ENCODE measurements at regions of chr15 and their contacts with region 1.

Region 1: DNA sequence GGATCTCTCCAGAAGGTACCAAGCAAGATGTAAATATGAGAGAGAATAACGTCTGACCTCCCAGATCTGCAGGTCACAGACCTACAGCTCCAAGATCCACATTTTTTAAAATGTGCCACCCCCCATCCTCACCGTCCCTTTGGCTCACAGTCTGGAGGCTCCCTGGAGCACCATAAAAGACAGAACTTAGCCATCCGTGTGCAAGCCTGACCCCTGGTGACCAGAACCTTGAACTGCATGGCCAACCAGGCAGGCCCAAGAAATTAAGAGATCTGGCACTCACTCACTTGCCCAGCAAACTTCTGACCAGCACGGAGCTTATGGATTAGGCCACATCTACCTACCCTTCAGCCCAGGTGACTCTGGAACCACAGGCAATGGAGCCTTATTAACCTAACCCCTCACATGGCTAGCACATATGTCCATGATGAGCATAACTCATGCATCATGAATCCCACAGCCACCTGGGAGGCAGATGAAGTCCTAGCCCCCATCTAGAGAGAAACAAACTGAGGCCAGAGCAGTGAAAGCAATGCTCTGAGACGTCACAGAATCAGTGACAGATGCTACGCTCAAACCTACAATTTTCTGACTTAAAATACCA is 275.3 kb downstream of the UACA start:
- DNase-seq: peak; percentile 82
- ATAC-seq: no peak
- H3K4me3 Mint-ChIP-seq: no peak overlapping the region
- H3K27ac Mint-ChIP-seq: no peak overlapping the region
- H3K4me1 Mint-ChIP-seq: peaks cover 76% of the 10 kb centered on the region
- H3K27me3 Mint-ChIP-seq: peaks cover 69% of the 10 kb centered on the region

Region 2: GRCh38 chr15:70097337-70098169 is 390.6 kb before region 1 on chr15 and contains the start of gene TLE3:
- CTCF ChIA-PET with region 1: interaction called, 19 read pairs
- DNase-seq: peak; percentile 98
- ATAC-seq: peak; percentile 74
- H3K4me3 Mint-ChIP-seq: peak within 1 kb of the TSS; percentile 95
- H3K27ac Mint-ChIP-seq: peak within 1 kb of the TSS; percentile 97
- H3K4me1 Mint-ChIP-seq: peaks cover 56% of the 10 kb centered on the region
- H3K27me3 Mint-ChIP-seq: peaks cover 22% of the 10 kb centered on the region
- total RNA-seq, gene TLE3: 48.8 to 53.5 TPM

Region 3: DNA sequence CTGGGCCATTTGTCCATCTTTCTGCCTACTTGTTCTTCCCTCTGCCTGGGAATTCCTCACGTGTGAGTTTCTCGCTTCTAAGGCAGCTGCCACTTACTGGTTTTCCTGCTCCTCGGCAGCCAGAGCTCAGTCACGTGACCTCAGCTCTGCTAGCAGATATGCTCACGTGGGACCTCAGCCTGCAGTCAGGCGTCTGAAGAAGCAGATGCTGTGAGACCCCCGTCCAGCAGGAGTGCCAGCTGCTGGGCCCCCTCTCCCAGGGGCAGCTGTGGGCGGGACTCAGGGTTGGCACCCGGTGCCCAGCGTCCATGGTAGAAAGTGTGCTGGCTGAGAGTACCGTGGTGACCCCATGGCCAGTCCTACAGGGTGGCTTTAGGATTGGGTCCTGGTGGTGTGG is 229.1 kb before region 1 on chr15:
- CTCF ChIA-PET with region 1: interaction called, 11 read pairs
- DNase-seq: peak; percentile 71
- ATAC-seq: peak; percentile 35
- H3K4me3 Mint-ChIP-seq: peak overlapping the region; percentile 4
- H3K27ac Mint-ChIP-seq: peak overlapping the region; percentile 56
- H3K4me1 Mint-ChIP-seq: peaks cover 34% of the 10 kb centered on the region
- H3K27me3 Mint-ChIP-seq: peaks cover 36% of the 10 kb centered on the region

Region 4: DNA sequence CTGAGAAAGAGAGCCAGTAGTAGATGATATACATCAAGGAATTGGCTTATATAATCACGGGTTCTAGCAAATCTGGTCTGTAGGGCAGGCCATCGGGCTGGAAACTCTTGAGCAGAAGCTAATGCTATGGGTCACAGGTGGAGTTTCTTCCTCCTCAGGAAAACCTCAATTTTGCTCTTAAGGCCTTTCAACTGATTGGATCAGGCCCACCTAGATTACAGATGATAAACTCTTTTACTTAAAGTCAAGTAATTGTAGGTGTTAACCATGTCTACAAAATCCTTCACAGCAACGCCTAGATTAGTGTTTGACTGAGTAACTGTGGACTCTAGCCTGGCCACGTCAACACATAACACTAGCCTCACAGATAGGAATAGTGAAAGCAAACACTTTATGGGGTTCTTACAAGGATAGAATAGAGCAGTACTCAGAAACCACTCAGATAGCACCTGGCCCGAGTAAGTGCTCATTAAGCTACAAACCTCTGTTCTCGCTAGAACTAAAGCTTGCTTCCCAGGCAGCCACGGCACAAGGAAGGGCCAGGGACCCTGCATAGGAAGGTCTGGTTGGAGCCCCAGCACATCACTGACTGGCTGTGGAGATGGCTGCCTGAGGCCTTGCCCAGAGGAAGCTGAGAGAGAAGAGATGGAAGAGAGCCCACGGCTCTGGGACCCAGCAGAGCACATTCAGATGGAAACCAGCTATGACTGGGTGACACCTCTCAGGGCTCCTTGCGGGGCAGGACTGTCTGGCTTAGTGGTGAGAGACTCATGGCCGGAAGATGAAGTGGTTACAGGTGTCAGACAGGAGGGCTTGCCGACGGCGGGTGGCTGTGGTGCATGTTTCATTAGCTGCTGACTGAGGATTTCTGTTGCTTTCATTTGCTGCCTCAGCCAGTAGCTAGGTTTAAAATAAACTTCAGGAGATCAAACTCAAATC is 187.9 kb before region 1 on chr15:
- CTCF ChIA-PET with region 1: interaction called, 11 read pairs
- DNase-seq: peak; percentile 94
- ATAC-seq: peak; percentile 97
- H3K4me3 Mint-ChIP-seq: no peak overlapping the region
- H3K27ac Mint-ChIP-seq: peak overlapping the region; percentile 58
- H3K4me1 Mint-ChIP-seq: peaks cover 18% of the 10 kb centered on the region
- H3K27me3 Mint-ChIP-seq: peaks cover 36% of the 10 kb centered on the region

Region 5: GRCh38 chr15:70466895-70467529 is 21.1 kb before region 1 on chr15:
- CTCF ChIA-PET with region 1: interaction called, 55 read pairs
- DNase-seq: peak; percentile 65
- ATAC-seq: peak; percentile 87
- H3K4me3 Mint-ChIP-seq: no peak overlapping the region
- H3K27ac Mint-ChIP-seq: no peak overlapping the region
- H3K4me1 Mint-ChIP-seq: peaks cover 4% of the 10 kb centered on the region
- H3K27me3 Mint-ChIP-seq: peaks cover 87% of the 10 kb centered on the region

Region 6: GRCh38 chr15:70504299-70504951 is 16.3 kb after region 1 on chr15:
- CTCF ChIA-PET with region 1: interaction called, 29 read pairs
- DNase-seq: peak; percentile 56
- ATAC-seq: no peak
- H3K4me3 Mint-ChIP-seq: no peak overlapping the region
- H3K27ac Mint-ChIP-seq: peak overlapping the region; percentile 67
- H3K4me1 Mint-ChIP-seq: peaks cover 70% of the 10 kb centered on the region
- H3K27me3 Mint-ChIP-seq: peaks cover 20% of the 10 kb centered on the region

Region 7: DNA sequence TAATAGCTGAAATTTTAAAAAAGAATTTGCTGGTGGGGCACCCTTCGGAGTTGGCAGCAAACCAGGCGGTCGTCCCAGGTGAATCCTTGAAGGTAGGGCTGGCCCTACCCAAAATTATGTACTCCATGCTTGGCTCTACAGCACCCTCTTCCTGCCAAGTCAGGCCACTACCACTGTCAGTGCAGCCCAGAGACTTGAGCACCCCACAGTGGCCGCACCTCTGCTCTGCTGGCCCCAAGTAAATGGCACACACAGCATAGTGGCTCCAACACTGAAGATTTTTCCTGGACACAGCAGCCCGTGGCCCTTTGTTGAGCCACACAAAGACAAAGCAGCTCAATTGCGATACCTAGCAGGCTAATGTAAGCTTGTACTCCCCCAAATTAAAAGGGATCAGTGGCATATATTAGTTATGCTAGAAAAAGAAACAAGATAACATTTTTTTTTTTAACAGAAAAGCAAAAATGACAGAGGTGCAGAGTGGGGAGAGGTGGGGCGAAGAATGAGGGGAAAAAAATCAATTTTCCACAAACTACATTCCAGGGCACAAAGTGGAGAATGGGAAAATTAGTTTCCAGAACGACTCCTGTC is 24.8 kb after region 1 on chr15:
- CTCF ChIA-PET with region 1: interaction called, 18 read pairs
- DNase-seq: peak; percentile 84
- ATAC-seq: peak; percentile 91
- H3K4me3 Mint-ChIP-seq: no peak overlapping the region
- H3K27ac Mint-ChIP-seq: no peak overlapping the region
- H3K4me1 Mint-ChIP-seq: peaks cover 30% of the 10 kb centered on the region
- H3K27me3 Mint-ChIP-seq: peaks cover 57% of the 10 kb centered on the region

Measured in activated CD8-positive, alpha-beta memory T cell treated with anti-CD3 and anti-CD28 coated beads, Interleukin-2, amount 10 ng/mL, durations not matched to agents 7 days and 5 days (primary cell).